ENCODE measurements at regions of chr16 and their contacts with region 1.

Region 1: DNA sequence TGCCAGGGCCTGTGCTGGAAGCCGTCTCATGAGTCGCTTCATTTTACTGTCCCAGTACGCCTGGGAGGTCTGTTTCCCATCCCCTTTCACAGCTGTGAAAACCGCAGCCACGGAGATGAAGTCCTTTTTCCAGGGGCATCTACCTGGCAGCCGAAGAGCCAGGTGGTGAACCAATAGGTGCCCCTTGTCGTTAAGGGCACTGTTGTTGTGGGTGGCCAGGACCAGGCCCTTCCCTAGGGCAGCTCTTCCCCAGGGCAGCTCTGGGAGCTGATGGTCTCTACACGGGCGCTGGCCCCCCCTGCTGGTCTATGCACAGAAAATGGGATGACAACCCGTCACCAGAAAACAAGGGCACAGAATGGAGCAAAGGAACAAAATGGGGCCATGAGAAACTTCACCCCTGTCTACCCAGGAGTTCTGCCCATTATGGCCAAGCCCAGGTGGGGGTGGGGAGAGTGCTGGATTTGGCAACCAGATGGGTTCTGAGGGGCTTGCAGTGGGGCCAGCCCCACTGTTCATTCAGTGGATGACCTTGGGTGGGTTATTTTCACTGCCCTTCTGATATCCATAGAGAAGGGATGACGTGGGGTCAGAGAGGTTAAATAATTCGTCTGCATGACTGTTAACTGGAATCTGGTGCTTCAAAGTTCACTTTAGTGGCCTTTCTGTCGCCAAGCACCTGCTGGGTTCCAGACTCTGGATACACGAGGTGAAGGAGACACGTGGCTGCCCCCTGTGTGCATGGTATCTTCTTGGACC is 11.5 kb downstream of the RMI2 start:
- DNase-seq: peak; percentile 59 to 86 (median 69)
- ATAC-seq: peak; percentile 40 to 68 (median 59)
- H3K4me3 ChIP-seq: no peak overlapping the region
- H3K27ac ChIP-seq: peak overlapping the region in 10 of 12 donors; percentile 52 to 87 (median 75)
- H3K4me1 ChIP-seq: peaks cover 5 to 64% (median 25%) of the 10 kb centered on the region in 12 donors
- H3K27me3 ChIP-seq: peaks cover 0 to 34% (median 0%) of the 10 kb centered on the region in 9 donors
- CTCF ChIP-seq: peak; percentile 45 to 72 (median 55)
- POLR2A ChIP-seq: no peak

Region 2: DNA sequence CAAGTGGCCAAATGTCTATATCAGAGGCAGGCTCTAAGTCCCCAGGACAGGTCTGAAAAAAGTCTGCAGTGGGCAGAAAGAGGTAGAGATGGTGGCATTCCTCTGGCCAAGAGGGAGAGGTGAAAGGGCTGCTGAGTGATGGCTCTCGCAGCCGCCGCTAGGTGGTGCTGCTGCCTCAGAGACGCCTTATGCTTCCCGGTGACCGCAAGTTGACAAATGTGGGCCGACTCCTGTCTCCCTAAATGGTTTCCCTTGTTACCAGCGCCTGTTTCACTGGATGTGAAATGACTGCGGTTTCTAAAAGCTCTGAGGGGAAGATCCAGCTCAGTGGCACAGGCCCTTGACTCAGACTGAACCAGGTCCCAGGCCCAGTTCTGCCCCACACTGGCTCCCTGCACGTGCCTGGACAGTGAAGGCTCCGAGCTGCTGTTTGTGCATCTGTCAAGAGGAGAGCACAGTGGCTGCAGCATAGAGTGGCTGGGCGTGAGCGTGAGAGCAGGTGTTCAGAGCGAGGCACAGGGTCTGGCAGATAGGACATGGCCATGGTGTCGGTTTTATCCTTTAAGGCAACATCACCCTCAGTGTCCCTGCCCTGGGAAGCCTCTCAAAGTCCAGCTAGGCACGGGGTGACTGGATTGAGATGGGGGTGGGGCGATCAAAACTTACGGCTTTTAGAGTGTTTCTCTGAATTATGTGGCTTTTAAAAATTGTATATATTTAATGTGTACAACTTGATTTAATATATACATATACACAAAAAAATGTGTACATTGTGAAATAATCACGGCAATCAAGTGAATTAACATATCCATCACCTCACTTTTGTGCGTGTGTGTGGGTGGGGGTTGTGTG is 392.5 kb before region 1 on chr16:
- intact Hi-C with region 1: loop called in 7 of 10 experiments (anchors 2 to 5 kb)
- DNase-seq: peak; percentile 79 to 90 (median 84)
- ATAC-seq: peak; percentile 78 to 89 (median 84)
- H3K4me3 ChIP-seq: no peak overlapping the region
- H3K27ac ChIP-seq: peak overlapping the region in 2 of 12 donors; percentile 8 to 43
- H3K4me1 ChIP-seq: peaks cover 0 to 33% (median 20%) of the 10 kb centered on the region in 12 donors
- H3K27me3 ChIP-seq: no peaks in the 10 kb centered on the region
- CTCF ChIP-seq: peak; percentile 90 to 98 (median 94)
- POLR2A ChIP-seq: no peak

Region 3: DNA sequence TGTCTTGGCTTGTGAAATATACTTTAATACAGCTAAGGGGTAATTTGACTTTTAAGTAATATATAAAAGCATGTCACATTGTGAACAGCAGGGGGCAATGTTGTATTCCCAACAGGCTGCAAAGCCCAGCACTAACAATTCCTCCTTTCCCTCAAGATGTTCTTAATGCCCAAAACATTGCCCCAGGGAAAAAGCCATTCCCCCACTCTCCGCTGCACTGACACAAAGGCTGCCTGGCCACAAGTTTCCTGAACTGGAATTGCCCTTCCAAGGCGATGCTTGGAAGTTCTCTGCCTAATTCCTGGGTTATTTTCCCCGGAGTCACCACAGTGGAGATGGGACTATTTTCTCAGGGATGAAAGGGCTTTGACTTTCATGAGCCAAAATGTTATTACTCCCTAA is 385.2 kb before region 1 on chr16:
- intact Hi-C with region 1: loop called in 7 of 10 experiments (anchors 1 to 5 kb)
- DNase-seq: peak in 4 of 5 donors; percentile 29 to 48 (median 42)
- ATAC-seq: peak in 3 of 4 donors; percentile 51 to 72 (median 52)
- H3K4me3 ChIP-seq: no peak overlapping the region
- H3K27ac ChIP-seq: peak overlapping the region in 1 of 12 donors; percentile 5
- H3K4me1 ChIP-seq: peaks cover 0 to 27% (median 12%) of the 10 kb centered on the region in 12 donors
- H3K27me3 ChIP-seq: no peaks in the 10 kb centered on the region
- CTCF ChIP-seq: peak; percentile 70 to 87 (median 79)
- POLR2A ChIP-seq: no peak

Region 4: GRCh38 chr16:11297492-11298142 is 59.1 kb before region 1 on chr16:
- intact Hi-C with region 1: loop called in 2 of 10 experiments (anchors 5 to 10 kb)
- DNase-seq: peak; percentile 68 to 88 (median 78)
- ATAC-seq: peak; percentile 95 to 98 (median 96)
- H3K4me3 ChIP-seq: peak overlapping the region in 8 of 12 donors; percentile 4 to 38 (median 22)
- H3K27ac ChIP-seq: peak overlapping the region in 10 of 12 donors; percentile 53 to 70 (median 60)
- H3K4me1 ChIP-seq: peaks cover 0 to 23% (median 13%) of the 10 kb centered on the region in 12 donors
- H3K27me3 ChIP-seq: no peaks in the 10 kb centered on the region
- CTCF ChIP-seq: peak in 5 of 12 donors; percentile 16 to 47 (median 38)
- POLR2A ChIP-seq: no peak

Region 5: DNA sequence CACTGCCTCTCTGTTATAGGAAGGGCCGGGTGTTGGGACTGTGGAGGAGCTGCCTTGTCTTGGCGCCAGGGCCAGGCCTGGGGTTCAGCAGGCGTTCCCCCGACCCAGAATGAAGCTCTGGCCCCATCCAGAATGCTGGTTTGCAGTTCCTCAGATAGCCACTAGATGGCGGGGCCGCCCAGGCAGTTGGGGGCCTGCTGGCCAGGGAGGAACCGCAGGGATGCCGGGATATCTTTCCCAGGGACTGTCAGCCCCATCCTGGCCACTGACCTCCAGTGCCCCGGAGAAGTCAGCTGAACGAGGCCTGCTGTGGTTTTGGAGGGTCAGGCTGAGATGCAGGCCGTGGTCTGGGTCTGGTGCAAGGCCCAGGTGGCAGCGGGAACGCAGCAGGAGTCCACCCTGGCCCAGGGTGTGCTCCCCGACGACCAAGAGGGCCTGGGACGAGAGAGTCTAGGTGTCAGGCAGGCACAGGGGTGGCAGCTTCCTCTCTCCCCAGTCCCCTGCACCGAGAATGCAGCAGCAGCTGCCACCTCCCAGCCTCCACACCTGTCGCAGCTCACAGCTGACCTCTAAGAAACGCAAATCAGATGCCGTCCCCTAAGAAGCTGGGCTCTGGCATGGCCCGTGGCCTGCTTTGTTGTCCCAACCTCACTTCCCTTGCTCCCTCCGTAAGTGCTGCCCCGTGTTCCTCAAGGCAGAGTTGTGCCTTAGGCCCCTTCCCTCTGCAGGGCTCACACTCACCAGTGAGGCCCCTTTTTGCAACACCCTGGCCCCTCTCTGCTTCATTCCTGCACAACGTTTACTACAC is 39.7 kb after region 1 on chr16:
- intact Hi-C with region 1: no loop called
- DNase-seq: peak; percentile 71 to 83 (median 76)
- ATAC-seq: peak; percentile 63 to 84 (median 84)
- H3K4me3 ChIP-seq: no peak overlapping the region
- H3K27ac ChIP-seq: peak overlapping the region in 3 of 12 donors; percentile 25 to 54 (median 30)
- H3K4me1 ChIP-seq: peaks cover 0 to 7% (median 2%) of the 10 kb centered on the region in 12 donors
- H3K27me3 ChIP-seq: peaks cover 0 to 3% (median 0%) of the 10 kb centered on the region in 9 donors
- CTCF ChIP-seq: peak; percentile 96 to 100 (median 98)
- POLR2A ChIP-seq: no peak

Measured in heart left ventricle (tissue), 16 donors.